Common myeloid progenitor, CD34-positive (primary cell): ENCODE measurements at regions of chr1 and their contacts with region 1.

Region 1: GRCh38 chr1:95043141-95043980 is 29.4 kb downstream of the ALG14 start:
- DNase-seq: peak; percentile 84 to 92 (median 88)
- H3K4me3 ChIP-seq: no peak overlapping the region
- H3K27ac ChIP-seq: no peak overlapping the region
- H3K4me1 ChIP-seq: no peaks in the 10 kb centered on the region
- H3K27me3 ChIP-seq: no peaks in the 10 kb centered on the region

Region 2: GRCh38 chr1:94843430-94843829 is 199.9 kb before region 1 on chr1:
- CTCF ChIA-PET with region 1: interaction called, 10 read pairs
- POLR2A ChIA-PET with region 1: no interaction called
- DNase-seq: no peak
- H3K4me3 ChIP-seq: no peak overlapping the region
- H3K27ac ChIP-seq: no peak overlapping the region
- H3K4me1 ChIP-seq: no peaks in the 10 kb centered on the region
- H3K27me3 ChIP-seq: peaks cover 0 to 33% (median 14%) of the 10 kb centered on the region in 5 experiments

Region 3: GRCh38 chr1:95223110-95223509 is 179.7 kb after region 1 on chr1:
- CTCF ChIA-PET with region 1: no interaction called
- POLR2A ChIA-PET with region 1: no interaction called
- DNase-seq: no peak
- H3K4me3 ChIP-seq: no peak overlapping the region
- H3K27ac ChIP-seq: no peak overlapping the region
- H3K4me1 ChIP-seq: no peaks in the 10 kb centered on the region
- H3K27me3 ChIP-seq: peaks cover 0 to 2% (median 0%) of the 10 kb centered on the region in 5 experiments